PC-9 (cell line): ENCODE measurements at regions of chr17 and their contacts with region 1.

Region 1: GRCh38 chr17:50668025-50668837 is 33.5 kb downstream of the ABCC3 start:
- DNase-seq: peak in 1 of 2 experiments; percentile 25
- H3K4me3 ChIP-seq: no peak overlapping the region
- H3K27ac ChIP-seq: peak overlapping the region; percentile 77
- H3K4me1 ChIP-seq: peaks cover 65% of the 10 kb centered on the region
- H3K27me3 ChIP-seq: no peaks in the 10 kb centered on the region
- CTCF ChIP-seq: no peak

Region 2: GRCh38 chr17:49798182-49798581 is 870.0 kb before region 1 on chr17:
- CTCF ChIA-PET with region 1: no interaction called
- POLR2A ChIA-PET with region 1: no interaction called
- intact Hi-C with region 1: no loop called
- DNase-seq: no peak
- H3K4me3 ChIP-seq: no peak overlapping the region
- H3K27ac ChIP-seq: no peak overlapping the region
- H3K4me1 ChIP-seq: no peaks in the 10 kb centered on the region
- H3K27me3 ChIP-seq: no peaks in the 10 kb centered on the region
- CTCF ChIP-seq: no peak

Region 3: GRCh38 chr17:50731575-50732460 is 63.6 kb after region 1 on chr17:
- CTCF ChIA-PET with region 1: interaction called, 12 read pairs
- POLR2A ChIA-PET with region 1: no interaction called
- intact Hi-C with region 1: no loop called
- DNase-seq: no peak
- H3K4me3 ChIP-seq: no peak overlapping the region
- H3K27ac ChIP-seq: 0 out of 2 replicates have a peak overlapping the region, but pooled peaks have one; percentile 20
- H3K4me1 ChIP-seq: 0 out of 2 replicates have a peak, but pooled peaks cover 6% of the 10 kb centered on the region
- H3K27me3 ChIP-seq: no peaks in the 10 kb centered on the region
- CTCF ChIP-seq: no peak

Region 4: DNA sequence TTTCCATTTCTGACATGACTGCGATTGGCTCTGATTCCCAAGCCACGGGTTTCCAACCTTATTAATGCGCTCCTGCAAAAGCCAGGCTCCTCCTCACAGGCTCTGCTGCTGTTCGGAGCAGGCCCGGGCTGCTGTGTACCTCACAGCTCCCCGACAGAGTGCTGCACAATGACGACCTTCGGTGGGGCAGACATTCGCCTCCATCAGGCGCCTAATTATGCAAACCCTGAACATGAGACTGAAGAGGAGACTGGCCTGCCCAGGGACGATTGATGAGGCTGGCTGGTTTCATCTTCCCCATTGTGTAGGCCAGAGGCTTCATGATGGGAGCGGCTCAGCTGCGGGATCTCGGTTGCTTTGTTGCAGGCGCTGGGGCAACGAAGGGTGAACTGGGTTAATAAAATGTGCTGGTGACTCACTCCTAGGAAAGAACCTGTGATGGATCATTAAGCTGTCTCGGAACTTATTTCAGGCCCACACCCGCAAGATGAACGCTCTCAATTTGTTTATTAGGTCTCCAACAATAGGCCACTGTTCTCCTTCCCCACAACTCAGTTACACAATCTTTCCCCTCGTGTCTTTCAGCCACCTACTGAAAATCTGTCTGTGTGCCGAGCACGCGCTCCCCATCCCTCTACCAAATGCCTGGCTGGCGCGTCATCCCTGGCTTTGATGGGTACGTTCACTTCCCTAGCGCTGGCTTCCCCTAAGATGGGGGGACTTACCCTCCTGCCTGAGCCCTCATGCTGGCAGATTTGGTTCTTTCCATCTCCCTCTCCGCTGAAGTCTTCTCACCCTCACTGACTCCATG is 225.2 kb after region 1 on chr17:
- CTCF ChIA-PET with region 1: no interaction called
- POLR2A ChIA-PET with region 1: no interaction called
- intact Hi-C with region 1: no loop called
- DNase-seq: peak in 1 of 2 experiments; percentile 77
- H3K4me3 ChIP-seq: no peak overlapping the region
- H3K27ac ChIP-seq: peak overlapping the region; percentile 39; the same call in 1 of the 2 replicates
- H3K4me1 ChIP-seq: peaks cover 55% of the 10 kb centered on the region
- H3K27me3 ChIP-seq: no peaks in the 10 kb centered on the region
- CTCF ChIP-seq: no peak